GM10248 (cell line): ENCODE measurements at regions of chr10 and their contacts with region 1.

Region 1: DNA sequence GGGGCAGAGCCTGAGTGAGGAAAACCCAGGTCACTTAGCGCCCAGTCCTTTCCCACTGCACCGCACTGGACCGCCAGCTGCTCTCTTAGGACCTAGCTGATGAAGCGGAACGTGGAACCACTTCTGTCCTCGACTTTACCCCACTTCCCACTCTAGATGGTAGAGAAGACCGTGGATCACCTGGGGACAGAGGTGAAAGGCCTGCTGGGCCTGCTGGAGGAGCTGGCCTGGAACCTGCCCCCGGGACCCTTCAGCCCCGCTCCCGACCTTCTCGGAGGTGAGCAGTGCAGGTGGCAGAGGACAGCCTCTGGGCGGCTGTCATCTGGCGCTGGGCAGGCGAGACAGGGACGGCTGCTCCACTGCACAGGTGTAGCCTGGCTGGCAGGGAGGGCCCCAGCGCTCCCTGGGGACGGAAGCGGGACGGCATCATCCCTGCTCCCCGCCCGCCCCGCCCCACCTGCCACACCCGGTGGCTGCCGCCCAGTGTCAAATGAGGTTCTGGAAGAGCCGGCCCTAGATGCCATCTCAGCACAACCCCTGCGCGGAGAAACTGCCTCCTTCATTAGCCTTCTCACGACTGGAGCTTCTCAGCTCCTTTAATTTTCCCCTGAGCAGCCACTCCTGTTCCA is 11.7 kb downstream of the PLAC9 start:
- DNase-seq: peak; percentile 59
- CTCF ChIP-seq: no peak

Region 2: GRCh38 chr10:80154975-80155695 is 11.0 kb after region 1 on chr10:
- CTCF ChIA-PET with region 1: interaction called, 11 read pairs
- POLR2A ChIA-PET with region 1: no interaction called
- DNase-seq: no peak
- CTCF ChIP-seq: no peak

Region 3: GRCh38 chr10:80187465-80188409 is 43.6 kb after region 1 on chr10:
- CTCF ChIA-PET with region 1: interaction called, 10 read pairs
- POLR2A ChIA-PET with region 1: no interaction called
- DNase-seq: peak; percentile 80
- CTCF ChIP-seq: no peak

Region 4: DNA sequence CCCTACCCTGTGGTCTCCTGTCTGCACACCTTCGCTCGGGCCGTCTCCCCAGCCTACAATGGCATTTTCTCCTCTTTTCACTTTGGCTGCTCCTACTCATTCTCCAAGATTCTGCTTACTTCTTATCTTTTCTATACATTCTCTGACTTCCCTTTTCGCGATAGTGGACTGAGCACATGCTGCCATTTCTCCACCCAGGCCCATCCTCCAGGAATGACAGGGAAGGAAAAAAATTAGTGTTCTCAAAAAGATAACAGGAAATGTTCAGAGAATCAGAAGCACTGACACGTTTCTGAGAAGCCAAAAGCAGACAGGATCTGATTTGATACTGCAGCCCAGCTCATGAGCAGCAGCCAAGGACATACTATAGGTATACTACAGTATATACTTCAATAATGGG is 67.6 kb after region 1 on chr10:
- CTCF ChIA-PET with region 1: interaction called, 23 read pairs
- POLR2A ChIA-PET with region 1: no interaction called
- DNase-seq: no peak
- CTCF ChIP-seq: no peak

Region 5: GRCh38 chr10:80260295-80261243 is 116.4 kb after region 1 on chr10:
- CTCF ChIA-PET with region 1: interaction called, 43 read pairs
- POLR2A ChIA-PET with region 1: no interaction called
- DNase-seq: peak; percentile 55
- CTCF ChIP-seq: peak; percentile 97

Region 6: GRCh38 chr10:80649183-80649582 is 505.0 kb after region 1 on chr10:
- CTCF ChIA-PET with region 1: no interaction called
- POLR2A ChIA-PET with region 1: no interaction called
- DNase-seq: no peak
- CTCF ChIP-seq: no peak